MCF 10A (cell line): ENCODE measurements at regions of chr16 and their contacts with region 1.

Region 1: DNA sequence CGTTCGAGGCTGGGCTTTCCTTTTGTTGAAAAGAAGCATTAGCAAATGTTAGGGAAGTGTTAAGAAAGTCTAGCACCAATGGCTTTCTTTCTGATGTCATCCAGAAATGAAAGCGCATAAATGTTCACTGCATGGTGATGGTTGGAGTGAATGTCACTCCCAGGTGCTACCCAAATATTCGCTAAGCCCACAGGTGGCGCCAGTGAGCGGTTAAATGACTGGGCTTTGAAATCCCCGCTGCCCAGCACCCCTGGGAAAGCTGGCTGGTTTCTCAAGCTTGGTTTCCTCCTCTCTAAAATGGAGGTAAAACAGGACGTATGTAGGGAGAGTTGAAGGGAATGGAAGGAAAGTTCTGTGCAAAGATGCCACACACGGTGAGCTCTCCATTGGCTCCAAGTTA is 104.4 kb downstream of the IRX5 start:
- DNase-seq: peak; percentile 64
- H3K4me3 Mint-ChIP-seq: no peak overlapping the region
- H3K27ac Mint-ChIP-seq: no peak overlapping the region
- H3K4me1 Mint-ChIP-seq: peaks cover 17% of the 10 kb centered on the region
- H3K27me3 Mint-ChIP-seq: no peaks in the 10 kb centered on the region
- CTCF ChIP-seq: peak; percentile 47

Region 2: GRCh38 chr16:55257966-55258613 is 223.1 kb after region 1 on chr16:
- CTCF ChIA-PET with region 1: interaction called, 3 read pairs
- POLR2A ChIA-PET with region 1: no interaction called
- intact Hi-C with region 1: loop called (anchors 5 kb)
- DNase-seq: peak; percentile 62
- H3K4me3 Mint-ChIP-seq: no peak overlapping the region
- H3K27ac Mint-ChIP-seq: no peak overlapping the region
- H3K4me1 Mint-ChIP-seq: no peaks in the 10 kb centered on the region
- H3K27me3 Mint-ChIP-seq: no peaks in the 10 kb centered on the region
- CTCF ChIP-seq: peak; percentile 79